Activated CD8-positive, alpha-beta T cell treated with anti-CD3 and anti-CD28 coated beads for 36 hours (primary cell): ENCODE measurements at regions of chr10 and their contacts with region 1.

Region 1: GRCh38 chr10:73644015-73644743 is 2.9 kb upstream of the MYOZ1 start:
- DNase-seq: peak; percentile 55
- ATAC-seq: peak; percentile 77
- H3K4me3 Mint-ChIP-seq: no peak overlapping the region
- H3K27ac Mint-ChIP-seq: peak overlapping the region; percentile 8
- H3K4me1 Mint-ChIP-seq: peaks cover 15% of the 10 kb centered on the region
- H3K27me3 Mint-ChIP-seq: no peaks in the 10 kb centered on the region
- CTCF ChIP-seq: peak; percentile 98

Region 2: GRCh38 chr10:73517271-73517877 is 126.8 kb before region 1 on chr10:
- CTCF ChIA-PET with region 1: interaction called, 10 read pairs
- POLR2A ChIA-PET with region 1: no interaction called
- intact Hi-C with region 1: no loop called
- DNase-seq: no peak
- ATAC-seq: no peak
- H3K4me3 Mint-ChIP-seq: no peak overlapping the region
- H3K27ac Mint-ChIP-seq: no peak overlapping the region
- H3K4me1 Mint-ChIP-seq: no peaks in the 10 kb centered on the region
- H3K27me3 Mint-ChIP-seq: no peaks in the 10 kb centered on the region
- CTCF ChIP-seq: no peak

Region 3: GRCh38 chr10:73537288-73537687 is 106.9 kb before region 1 on chr10:
- CTCF ChIA-PET with region 1: interaction called, 21 read pairs
- POLR2A ChIA-PET with region 1: no interaction called
- intact Hi-C with region 1: no loop called
- DNase-seq: no peak
- ATAC-seq: peak; percentile 37
- H3K4me3 Mint-ChIP-seq: no peak overlapping the region
- H3K27ac Mint-ChIP-seq: no peak overlapping the region
- H3K4me1 Mint-ChIP-seq: peaks cover 11% of the 10 kb centered on the region
- H3K27me3 Mint-ChIP-seq: no peaks in the 10 kb centered on the region
- CTCF ChIP-seq: no peak

Region 4: GRCh38 chr10:73625884-73626752 is 18.1 kb before region 1 on chr10:
- CTCF ChIA-PET with region 1: interaction called, 25 read pairs
- POLR2A ChIA-PET with region 1: interaction called, 3 read pairs
- intact Hi-C with region 1: no loop called
- DNase-seq: peak; percentile 98
- ATAC-seq: peak; percentile 98
- H3K4me3 Mint-ChIP-seq: peak overlapping the region; percentile 93
- H3K27ac Mint-ChIP-seq: peak overlapping the region; percentile 98
- H3K4me1 Mint-ChIP-seq: peaks cover 16% of the 10 kb centered on the region
- H3K27me3 Mint-ChIP-seq: no peaks in the 10 kb centered on the region
- CTCF ChIP-seq: no peak

Region 5: GRCh38 chr10:73771722-73772279 is 127.6 kb after region 1 on chr10:
- CTCF ChIA-PET with region 1: no interaction called
- POLR2A ChIA-PET with region 1: no interaction called
- intact Hi-C with region 1: no loop called
- DNase-seq: peak; percentile 82
- ATAC-seq: peak; percentile 3
- H3K4me3 Mint-ChIP-seq: peak overlapping the region; percentile 89
- H3K27ac Mint-ChIP-seq: peak overlapping the region; percentile 95
- H3K4me1 Mint-ChIP-seq: peaks cover 38% of the 10 kb centered on the region
- H3K27me3 Mint-ChIP-seq: no peaks in the 10 kb centered on the region
- CTCF ChIP-seq: no peak

Region 6: GRCh38 chr10:73798927-73799563 is 154.9 kb after region 1 on chr10:
- CTCF ChIA-PET with region 1: no interaction called
- POLR2A ChIA-PET with region 1: no interaction called
- intact Hi-C with region 1: no loop called
- DNase-seq: no peak
- ATAC-seq: peak; percentile 17
- H3K4me3 Mint-ChIP-seq: no peak overlapping the region
- H3K27ac Mint-ChIP-seq: no peak overlapping the region
- H3K4me1 Mint-ChIP-seq: peaks cover 11% of the 10 kb centered on the region
- H3K27me3 Mint-ChIP-seq: no peaks in the 10 kb centered on the region
- CTCF ChIP-seq: no peak